OCI-LY7 (cell line): ENCODE measurements at regions of chrX and their contacts with region 1.

Region 1: DNA sequence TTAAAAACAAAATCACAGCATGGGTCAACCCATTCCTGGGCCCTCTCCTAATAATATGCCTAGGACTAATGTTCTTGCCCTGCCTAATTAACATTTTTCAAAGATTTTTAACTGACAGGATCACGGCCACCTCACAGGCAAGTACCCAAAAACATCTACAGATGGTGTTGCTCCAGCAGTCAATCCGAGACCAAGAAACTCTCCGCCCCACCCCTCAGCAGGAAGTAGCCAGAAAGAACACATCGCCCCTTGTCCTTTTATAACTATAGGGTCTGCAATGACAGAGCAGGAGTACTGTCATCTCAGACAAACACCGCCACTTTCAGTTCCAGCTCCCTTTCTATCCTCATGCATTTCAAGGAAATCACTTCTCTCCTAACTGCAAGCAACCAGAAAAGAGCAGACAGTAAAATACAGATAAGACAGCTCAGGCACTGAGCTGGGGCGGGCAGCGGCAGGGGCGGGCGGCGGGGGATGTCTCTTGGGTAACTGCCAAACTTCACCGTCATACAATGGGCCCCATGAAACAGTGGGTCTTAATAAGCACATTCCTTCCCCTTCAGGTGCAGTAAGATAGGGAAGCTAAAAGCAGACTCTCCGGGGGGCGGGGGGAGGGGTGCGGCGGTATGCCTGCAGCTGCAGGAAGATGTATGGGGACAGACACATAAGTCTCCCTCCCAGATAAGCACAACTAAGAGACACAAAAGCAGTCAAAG is 67.4 kb downstream of the ZNF182 start:
- DNase-seq: peak; percentile 85
- H3K4me3 ChIP-seq: peak overlapping the region; percentile 64
- H3K27ac ChIP-seq: peak overlapping the region; percentile 98
- H3K4me1 ChIP-seq: peaks cover 31% of the 10 kb centered on the region
- CTCF ChIP-seq: 0 out of 2 replicates have a peak, but pooled peaks have one; percentile 18

Region 2: DNA sequence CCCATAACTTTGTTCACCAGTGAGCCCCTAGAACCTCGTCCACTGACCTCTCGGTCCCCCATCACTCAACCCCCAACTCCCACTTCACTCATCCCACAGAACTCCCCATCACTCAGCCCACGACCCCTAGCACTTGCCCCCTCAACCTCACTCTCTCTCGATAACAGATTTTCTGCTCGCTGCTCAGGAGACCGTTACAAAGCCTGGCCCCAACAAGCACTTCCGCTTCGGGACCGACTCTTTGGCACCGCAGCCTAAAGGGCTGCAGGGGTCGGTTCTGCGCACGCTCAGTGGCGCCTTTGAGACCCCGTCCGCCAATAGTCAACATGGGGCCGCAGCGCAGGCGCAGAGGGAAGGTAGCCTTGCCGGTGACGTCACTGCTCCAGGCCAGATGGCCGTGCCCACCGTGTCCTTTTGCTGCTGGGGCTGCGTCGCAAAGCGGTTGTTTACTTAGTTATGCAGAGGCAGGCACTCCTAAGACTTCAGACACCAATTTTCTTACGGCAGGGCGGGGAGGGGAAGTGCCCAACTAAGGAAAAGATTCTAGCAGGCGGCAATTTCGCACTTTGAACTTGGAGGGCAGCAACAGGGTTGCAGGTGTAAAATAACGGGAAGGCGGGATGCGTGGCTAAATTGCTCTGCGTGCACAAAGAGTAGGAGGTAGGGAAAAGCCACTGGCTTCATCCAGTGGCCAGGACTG is 67.5 kb after region 1 on chrX and contains the start of gene ZNF182:
- CTCF ChIA-PET with region 1: no interaction called
- POLR2A ChIA-PET with region 1: no interaction called
- intact Hi-C with region 1: loop called (anchors 5 kb)
- DNase-seq: peak; percentile 95
- H3K4me3 ChIP-seq: peak within 1 kb of the TSS; percentile 79
- H3K27ac ChIP-seq: peak within 1 kb of the TSS; percentile 73
- H3K4me1 ChIP-seq: peaks cover 16% of the 10 kb centered on the region
- CTCF ChIP-seq: no peak
- total RNA-seq, gene ZNF182: 5.0 and 6.1 TPM in 2 replicates